SK-N-SH (cell line): ENCODE measurements at regions of chr7 and their contacts with region 1.

Region 1: DNA sequence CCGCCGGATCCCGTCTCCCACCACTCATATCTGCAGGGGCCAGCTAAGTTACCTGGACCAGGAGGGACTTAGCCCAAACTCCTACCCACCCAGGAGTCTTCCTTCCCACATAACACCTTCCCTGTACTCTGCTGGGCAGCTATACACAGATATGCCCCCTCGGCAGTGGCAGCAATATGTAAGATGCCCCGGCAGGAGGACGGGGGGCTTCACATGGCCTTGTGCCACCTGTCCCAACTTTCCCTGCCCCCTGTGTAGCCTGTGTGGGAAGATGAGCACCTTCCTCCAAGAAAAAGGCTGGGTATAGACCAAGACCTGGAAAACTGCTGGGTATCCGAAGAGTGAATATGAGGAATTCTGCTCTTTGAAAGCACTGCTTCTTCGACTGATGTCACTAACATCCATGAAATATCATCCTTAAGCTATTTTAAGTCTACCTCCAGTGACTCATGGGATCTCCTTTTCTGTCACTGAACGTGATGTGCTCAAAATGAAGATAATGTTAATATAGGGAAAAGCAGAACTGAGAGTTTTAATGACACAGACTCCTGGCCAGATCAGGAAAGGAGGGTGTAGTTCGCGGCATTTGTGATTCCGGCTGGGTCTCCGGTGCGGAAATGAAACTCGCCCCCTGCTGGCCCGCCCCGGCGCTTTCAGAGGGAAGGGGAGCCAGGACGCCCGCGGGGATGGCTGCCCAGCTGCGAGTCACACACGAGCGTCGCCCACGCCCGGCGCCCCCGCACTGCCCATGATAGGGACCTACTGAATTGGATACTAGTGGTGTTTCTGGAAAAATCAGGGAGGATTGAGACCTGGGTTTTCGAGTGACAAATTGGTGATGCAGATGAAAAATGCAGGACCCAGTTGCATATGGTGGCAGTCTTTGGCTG is 256.9 kb upstream of the NFE2L3 start:
- DNase-seq: peak; percentile 86
- H3K4me3 ChIP-seq: peak overlapping the region; percentile 25 to 42; a peak in 3 of 4 replicates
- H3K27ac ChIP-seq: no peak overlapping the region
- H3K4me1 ChIP-seq: peaks cover 0 to 5% of the 10 kb centered on the region in 2 experiments; a peak in 2 of 4 replicates
- H3K27me3 ChIP-seq: peaks cover 5% of the 10 kb centered on the region; the same call in 1 of the 2 replicates
- CTCF ChIP-seq: peak; percentile 66
- EP300 ChIP-seq: no peak
- RAD21 ChIP-seq: peak; percentile 35

Region 2: GRCh38 chr7:25656581-25657026 is 238.5 kb before region 1 on chr7:
- CTCF ChIA-PET with region 1: no interaction called
- POLR2A ChIA-PET with region 1: no interaction called
- DNase-seq: peak; percentile 34
- H3K4me3 ChIP-seq: no peak overlapping the region
- H3K27ac ChIP-seq: peak overlapping the region in 1 of 2 experiments; percentile 94; a peak in 2 of 4 replicates
- H3K4me1 ChIP-seq: peaks cover 0 to 59% of the 10 kb centered on the region in 2 experiments; a peak in 3 of 4 replicates
- H3K27me3 ChIP-seq: no peaks in the 10 kb centered on the region
- CTCF ChIP-seq: no peak
- EP300 ChIP-seq: peak in 1 of 2 experiments; percentile 92; a peak in 3 of 4 replicates
- RAD21 ChIP-seq: peak; percentile 14; the same call in 1 of the 2 replicates

Region 3: DNA sequence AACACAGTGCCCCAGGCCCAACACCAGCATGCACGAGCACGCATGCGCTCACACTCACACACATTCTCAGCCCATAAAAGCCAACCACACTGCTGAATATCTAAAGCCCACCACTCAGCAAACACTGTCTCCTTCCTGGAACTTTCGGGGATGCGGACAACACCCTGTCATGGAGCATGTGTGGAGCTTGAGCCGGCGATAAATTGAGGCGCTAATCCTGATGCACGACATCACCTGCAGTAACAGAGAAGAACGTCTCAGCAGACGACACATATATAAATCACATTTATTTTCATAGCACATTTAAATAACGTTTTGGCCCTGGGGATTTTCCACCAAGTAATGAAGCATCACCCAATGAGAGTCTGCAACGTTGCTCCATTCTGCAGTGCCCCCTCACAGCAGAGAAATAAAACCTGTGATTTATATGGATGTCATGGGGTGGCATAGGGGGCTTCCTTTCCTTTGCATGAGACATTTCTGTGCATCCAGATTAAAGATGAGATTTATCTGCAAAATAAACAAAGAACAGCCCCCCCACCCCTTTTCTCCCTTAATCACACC is 10.8 kb before region 1 on chr7:
- CTCF ChIA-PET with region 1: interaction called, 111 read pairs
- POLR2A ChIA-PET with region 1: no interaction called
- DNase-seq: no peak
- H3K4me3 ChIP-seq: no peak overlapping the region
- H3K27ac ChIP-seq: no peak overlapping the region
- H3K4me1 ChIP-seq: peaks cover 0 to 15% of the 10 kb centered on the region in 2 experiments; a peak in 2 of 4 replicates
- H3K27me3 ChIP-seq: peaks cover 24% of the 10 kb centered on the region
- CTCF ChIP-seq: no peak
- EP300 ChIP-seq: no peak
- RAD21 ChIP-seq: no peak

Region 4: DNA sequence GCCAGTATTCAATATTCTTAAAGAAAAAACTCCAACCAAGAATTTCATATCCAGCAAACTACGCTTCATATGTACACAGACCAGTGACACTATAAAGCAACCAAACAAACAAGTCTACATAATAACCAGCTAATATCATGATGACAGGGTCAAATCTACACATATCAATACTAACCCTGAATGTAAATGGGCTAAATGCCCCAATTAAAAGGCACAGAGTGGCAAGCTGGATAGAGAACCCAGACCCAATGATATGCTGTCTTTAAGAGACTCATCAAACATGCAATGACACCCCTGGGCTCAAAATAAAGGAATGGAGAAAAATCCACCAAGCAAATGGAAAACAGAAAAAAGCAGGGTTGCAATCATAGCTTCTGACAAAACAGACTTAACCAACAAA is 38.8 kb after region 1 on chr7:
- CTCF ChIA-PET with region 1: interaction called, 13 read pairs
- POLR2A ChIA-PET with region 1: no interaction called
- DNase-seq: no peak
- H3K4me3 ChIP-seq: no peak overlapping the region
- H3K27ac ChIP-seq: no peak overlapping the region
- H3K4me1 ChIP-seq: no peaks in the 10 kb centered on the region
- H3K27me3 ChIP-seq: no peaks in the 10 kb centered on the region
- CTCF ChIP-seq: no peak
- EP300 ChIP-seq: no peak
- RAD21 ChIP-seq: no peak

Region 5: DNA sequence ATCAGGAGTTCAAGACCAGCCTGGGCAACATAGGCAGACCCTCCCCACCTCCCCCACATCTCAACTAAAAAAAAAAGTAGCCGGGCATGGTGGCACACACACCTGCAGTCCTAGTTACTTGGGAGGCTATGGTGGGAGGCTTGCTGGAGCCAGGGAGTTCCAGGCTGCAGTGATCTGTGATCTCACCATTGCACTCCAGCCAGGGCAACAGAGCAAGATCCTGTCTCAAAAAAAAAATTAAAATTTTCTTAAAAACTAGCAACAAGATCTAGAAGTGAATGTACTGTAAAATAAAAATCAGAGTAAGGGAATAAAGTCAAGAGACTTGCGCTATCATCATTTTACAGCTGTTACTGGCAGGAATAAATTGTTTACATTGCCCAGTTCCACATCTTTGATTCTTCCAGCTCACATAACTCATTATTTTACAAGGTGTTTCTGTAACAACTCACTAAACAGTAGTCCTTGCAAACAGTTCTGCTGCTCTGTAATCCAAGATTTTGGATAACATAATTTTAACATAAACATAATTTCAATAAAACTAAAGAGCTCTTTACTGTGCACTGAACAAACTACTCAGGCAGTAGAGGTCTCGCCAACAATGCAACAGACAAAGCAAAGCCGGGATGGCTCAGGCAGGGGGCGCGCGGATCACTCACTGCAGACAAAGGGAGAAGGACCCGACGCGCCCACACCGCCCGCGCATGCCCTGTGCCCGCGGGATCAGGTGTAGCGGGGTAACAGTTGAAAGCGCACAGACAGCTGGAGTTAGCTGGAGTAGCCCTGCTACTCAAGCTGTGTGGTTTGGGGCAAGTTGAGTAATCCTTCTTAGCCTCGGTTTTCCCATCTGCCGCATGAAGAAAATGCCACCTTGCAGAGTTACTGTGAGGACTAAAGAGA is 183.5 kb after region 1 on chr7:
- CTCF ChIA-PET with region 1: interaction called, 29 read pairs
- POLR2A ChIA-PET with region 1: no interaction called
- DNase-seq: peak; percentile 90
- H3K4me3 ChIP-seq: peak overlapping the region in 1 of 2 experiments; percentile 19; a peak in 1 of 4 replicates
- H3K27ac ChIP-seq: no peak overlapping the region
- H3K4me1 ChIP-seq: peaks cover 3 to 7% of the 10 kb centered on the region in 2 experiments; a peak in 2 of 4 replicates
- H3K27me3 ChIP-seq: peaks cover 46% of the 10 kb centered on the region; the same call in 1 of the 2 replicates
- CTCF ChIP-seq: peak; percentile 67
- EP300 ChIP-seq: no peak
- RAD21 ChIP-seq: peak; percentile 73

Region 6: GRCh38 chr7:26200444-26201246 is 305.5 kb after region 1 on chr7 and contains the start of gene HNRNPA2B1:
- CTCF ChIA-PET with region 1: interaction called, 20 read pairs
- POLR2A ChIA-PET with region 1: interaction called, 7 read pairs
- DNase-seq: peak; percentile 88
- H3K4me3 ChIP-seq: peak within 1 kb of the TSS; percentile 100
- H3K27ac ChIP-seq: peak within 1 kb of the TSS; percentile 99 to 100
- H3K4me1 ChIP-seq: peaks cover 24 to 37% of the 10 kb centered on the region in 2 experiments
- H3K27me3 ChIP-seq: no peaks in the 10 kb centered on the region
- CTCF ChIP-seq: no peak
- EP300 ChIP-seq: no peak
- RAD21 ChIP-seq: no peak
- polyA plus RNA-seq, gene HNRNPA2B1: 459 and 483 TPM in 2 replicates

Region 7: GRCh38 chr7:26667500-26668133 is 772.5 kb after region 1 on chr7:
- CTCF ChIA-PET with region 1: interaction called, 131 read pairs
- POLR2A ChIA-PET with region 1: no interaction called
- DNase-seq: peak; percentile 71
- H3K4me3 ChIP-seq: peak overlapping the region in 1 of 2 experiments; percentile 21; a peak in 1 of 4 replicates
- H3K27ac ChIP-seq: no peak overlapping the region
- H3K4me1 ChIP-seq: peaks cover 0 to 3% of the 10 kb centered on the region in 2 experiments; a peak in 1 of 4 replicates
- H3K27me3 ChIP-seq: no peaks in the 10 kb centered on the region; the same call in 1 of the 2 replicates
- CTCF ChIP-seq: peak; percentile 98
- EP300 ChIP-seq: peak in 1 of 2 experiments; percentile 53; a peak in 1 of 4 replicates
- RAD21 ChIP-seq: peak; percentile 100